ENCODE measurements at regions of chr14 and their contacts with region 1.

Region 1: GRCh38 chr14:81464247-81465002 is 64.3 kb upstream of the STON2 start:
- DNase-seq: peak; percentile 64
- ATAC-seq: peak; percentile 79
- H3K4me3 ChIP-seq: peak overlapping the region; percentile 51
- H3K27ac ChIP-seq: no peak overlapping the region
- H3K4me1 ChIP-seq: no peaks in the 10 kb centered on the region
- H3K27me3 ChIP-seq: no peaks in the 10 kb centered on the region; the same call in 1 of the 2 replicates
- CTCF ChIP-seq: peak; percentile 92
- POLR2A ChIP-seq: no peak
- RAD21 ChIP-seq: peak; percentile 82

Region 2: GRCh38 chr14:81220830-81221578 is 243.4 kb before region 1 on chr14 and contains the start of gene GTF2A1:
- CTCF ChIA-PET with region 1: no interaction called
- POLR2A ChIA-PET with region 1: no interaction called
- dilution Hi-C with region 1: no loop called
- in situ Hi-C with region 1: no loop called
- intact Hi-C with region 1: loop called (anchors 1 kb)
- DNase-seq: peak; percentile 96
- ATAC-seq: peak; percentile 88
- H3K4me3 ChIP-seq: peak within 1 kb of the TSS; percentile 76
- H3K27ac ChIP-seq: peak within 1 kb of the TSS; percentile 99
- H3K4me1 ChIP-seq: no peaks in the 10 kb centered on the region; the same call in 1 of the 2 replicates
- H3K27me3 ChIP-seq: no peaks in the 10 kb centered on the region
- CTCF ChIP-seq: no peak
- POLR2A ChIP-seq: peak; percentile 74
- RAD21 ChIP-seq: no peak
- total RNA-seq, gene GTF2A1: 41.9 and 60.4 TPM in 2 replicates

Region 3: DNA sequence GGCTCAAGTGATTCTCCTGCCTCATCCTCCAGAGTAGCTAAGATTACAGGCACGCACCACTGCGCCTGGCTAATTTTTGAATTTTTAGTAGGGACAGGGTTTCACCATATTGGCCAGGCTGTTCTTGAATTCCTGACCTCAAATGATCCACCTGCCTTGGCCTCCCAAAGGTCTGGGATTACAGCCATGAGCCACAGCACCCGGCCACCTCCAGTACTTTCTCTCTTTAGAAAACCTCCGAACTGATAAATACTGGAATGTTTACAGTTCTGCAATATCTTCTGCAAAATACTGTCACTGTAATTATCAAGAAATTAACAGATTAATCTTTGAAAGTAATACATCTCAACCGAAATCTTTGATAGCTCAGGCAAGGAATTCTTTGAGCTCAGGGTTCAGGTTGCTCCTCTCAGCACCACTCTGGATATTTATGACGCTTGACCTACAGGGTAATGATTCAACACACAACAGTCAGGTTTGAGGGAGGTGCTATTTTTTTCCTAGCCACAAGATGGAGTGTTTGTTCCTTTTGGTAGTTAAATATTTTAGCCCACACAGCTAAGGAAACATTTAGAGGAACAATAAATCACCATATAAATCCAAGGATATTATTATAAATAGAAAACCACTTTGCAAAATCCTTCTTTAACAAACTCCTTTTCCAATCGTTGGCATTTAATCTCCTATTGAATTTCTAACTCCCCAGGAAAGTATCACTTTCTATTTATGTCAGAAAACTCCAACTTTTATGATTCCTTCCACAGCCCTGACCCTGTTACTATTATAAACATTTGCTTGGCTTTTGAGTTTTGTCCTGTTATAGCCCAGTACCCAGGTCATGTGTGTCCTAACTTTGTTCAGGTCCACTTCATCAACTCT is 195.1 kb before region 1 on chr14:
- CTCF ChIA-PET with region 1: interaction called, 10 read pairs
- POLR2A ChIA-PET with region 1: no interaction called
- dilution Hi-C with region 1: no loop called
- in situ Hi-C with region 1: no loop called
- intact Hi-C with region 1: loop called (anchors 1 kb)
- DNase-seq: peak; percentile 68
- ATAC-seq: peak; percentile 98
- H3K4me3 ChIP-seq: no peak overlapping the region
- H3K27ac ChIP-seq: no peak overlapping the region
- H3K4me1 ChIP-seq: no peaks in the 10 kb centered on the region
- H3K27me3 ChIP-seq: no peaks in the 10 kb centered on the region; the same call in 1 of the 2 replicates
- CTCF ChIP-seq: peak; percentile 79
- POLR2A ChIP-seq: no peak
- RAD21 ChIP-seq: peak; percentile 66